ENCODE measurements at regions of chr5 and their contacts with region 1.

Region 1: DNA sequence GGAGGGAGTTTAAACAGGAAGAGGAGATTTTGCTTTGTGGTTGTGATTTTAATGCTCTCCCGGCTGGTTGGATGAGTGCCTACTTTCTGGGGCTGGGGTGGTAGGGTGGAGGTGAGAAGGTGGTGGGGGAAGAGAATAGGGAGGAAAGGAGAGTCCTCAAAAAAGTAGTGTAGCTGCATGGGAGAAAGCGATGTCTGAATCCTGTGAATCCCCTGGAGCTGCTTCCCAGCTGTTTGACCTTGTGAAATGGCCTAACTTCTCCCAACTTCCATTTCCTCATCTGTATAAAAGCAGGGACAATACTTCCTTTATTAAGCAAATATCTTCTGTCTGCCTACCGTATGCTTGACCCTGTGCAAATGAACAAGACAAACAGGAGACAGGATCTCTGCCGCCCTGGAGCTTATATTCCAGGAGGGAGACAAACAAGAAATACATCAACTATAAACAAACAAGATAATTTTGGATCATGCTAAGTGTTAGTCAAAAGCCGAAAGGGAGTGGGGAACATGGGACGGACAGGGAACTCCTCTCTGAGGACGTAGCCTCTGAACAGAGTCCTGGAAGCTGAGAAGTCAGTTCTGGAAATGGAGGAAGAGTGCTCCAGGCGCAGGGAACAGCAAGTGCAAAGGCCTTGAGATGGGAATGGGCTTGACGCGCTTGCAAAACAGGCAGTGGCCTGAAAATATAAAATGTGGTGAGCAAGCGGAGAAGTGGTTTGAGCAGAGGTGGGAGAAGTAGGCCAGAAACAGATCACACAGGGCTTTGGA is 103.5 kb downstream of the SPRY4 start:
- DNase-seq: no peak
- H3K4me3 Mint-ChIP-seq: no peak overlapping the region
- H3K27ac Mint-ChIP-seq: no peak overlapping the region
- H3K4me1 Mint-ChIP-seq: peaks cover 32% of the 10 kb centered on the region
- H3K27me3 Mint-ChIP-seq: peaks cover 2% of the 10 kb centered on the region

Region 2: DNA sequence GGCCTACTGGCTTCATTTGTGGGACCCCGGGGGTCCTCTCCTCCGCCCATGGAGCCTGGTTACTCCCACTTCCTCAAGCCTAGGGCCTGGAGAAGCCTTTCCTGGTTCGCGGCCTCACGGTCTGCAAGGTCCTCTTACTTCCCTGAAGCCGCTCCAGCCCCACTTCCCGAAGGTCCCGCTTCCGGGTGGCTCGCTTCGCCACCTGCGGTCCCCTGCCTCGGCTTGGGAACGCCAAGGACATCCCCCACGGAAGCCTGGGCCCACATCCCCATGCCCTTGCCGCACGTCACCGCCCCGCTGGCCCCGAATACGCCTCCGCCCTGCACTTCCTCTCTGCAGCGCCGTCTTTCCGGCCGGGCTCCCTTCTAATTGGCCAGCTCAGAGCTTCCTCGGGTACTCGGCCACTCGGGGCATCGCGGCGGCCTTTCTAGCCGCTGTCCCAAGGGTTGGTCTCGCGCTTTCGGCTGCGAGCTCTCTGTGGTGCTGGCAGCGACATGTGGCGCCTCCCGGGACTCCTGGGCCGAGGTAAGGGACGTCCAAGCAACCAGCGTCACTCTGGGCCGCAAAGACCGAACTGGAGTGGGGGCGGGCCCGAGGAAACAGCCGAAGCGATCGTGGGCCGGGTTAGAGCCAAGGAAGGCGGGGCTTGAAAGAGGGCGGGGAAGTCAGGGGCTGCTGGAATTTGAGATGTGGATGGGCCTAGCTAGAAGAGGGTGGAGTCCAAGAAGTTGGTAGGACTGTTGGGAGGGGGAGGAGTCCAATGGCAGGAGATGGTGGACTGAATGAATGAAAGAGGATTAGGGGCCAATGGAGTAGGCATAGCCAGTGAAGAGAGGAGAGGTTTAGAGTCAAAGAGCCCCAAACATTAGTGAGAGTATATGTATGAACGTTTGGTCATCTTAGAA is 297.6 kb before region 1 on chr5 and contains the start of gene DELE1:
- CTCF ChIA-PET with region 1: no interaction called
- intact Hi-C with region 1: loop called (anchors 1 kb)
- DNase-seq: peak; percentile 95
- H3K4me3 Mint-ChIP-seq: peak within 1 kb of the TSS; percentile 90
- H3K27ac Mint-ChIP-seq: peak within 1 kb of the TSS; percentile 93
- H3K4me1 Mint-ChIP-seq: peaks cover 18% of the 10 kb centered on the region
- H3K27me3 Mint-ChIP-seq: no peaks in the 10 kb centered on the region
- total RNA-seq, gene DELE1: 48.0 to 50.6 TPM

Region 3: DNA sequence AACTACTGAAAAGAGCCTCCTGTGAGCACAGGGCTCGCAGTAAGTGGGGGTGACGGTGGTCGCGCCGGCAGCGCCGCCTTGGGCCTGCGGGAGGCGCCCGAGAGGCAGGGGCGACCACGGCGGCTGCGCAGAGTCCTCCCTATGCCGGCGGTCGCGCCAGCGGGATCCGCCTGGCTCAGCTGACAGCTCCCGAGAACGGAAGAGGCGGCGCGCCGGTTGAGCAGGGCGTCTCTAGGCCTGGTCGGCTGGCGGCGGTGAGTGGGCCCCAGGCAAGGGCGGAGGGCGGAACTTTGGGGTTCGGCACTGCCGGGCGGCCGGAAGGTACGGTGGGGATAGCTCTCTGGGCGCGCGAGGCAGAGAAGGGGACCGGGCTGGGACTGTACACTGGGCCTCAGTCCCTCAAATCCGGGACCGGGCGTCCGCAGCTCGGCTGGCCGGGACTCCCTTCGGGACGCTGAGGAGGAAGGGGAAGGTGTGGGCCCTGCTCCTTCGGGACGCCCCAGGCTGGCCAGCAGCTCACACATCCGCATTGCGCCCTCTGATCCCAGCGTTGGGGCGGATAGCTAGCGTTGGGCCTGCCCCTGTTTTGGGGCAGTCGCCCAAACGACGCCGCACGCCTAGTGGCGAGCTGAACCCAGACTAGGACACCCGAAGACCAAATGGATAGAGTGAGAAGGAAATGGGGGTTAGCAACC is 252.2 kb before region 1 on chr5 and contains the start of gene RNF14:
- CTCF ChIA-PET with region 1: no interaction called
- intact Hi-C with region 1: loop called (anchors 1 kb)
- DNase-seq: peak; percentile 96
- H3K4me3 Mint-ChIP-seq: peak within 1 kb of the TSS; percentile 93
- H3K27ac Mint-ChIP-seq: peak within 1 kb of the TSS; percentile 91
- H3K4me1 Mint-ChIP-seq: peaks cover 37% of the 10 kb centered on the region
- H3K27me3 Mint-ChIP-seq: no peaks in the 10 kb centered on the region
- total RNA-seq, gene RNF14: 29.8 to 35.6 TPM

Region 4: DNA sequence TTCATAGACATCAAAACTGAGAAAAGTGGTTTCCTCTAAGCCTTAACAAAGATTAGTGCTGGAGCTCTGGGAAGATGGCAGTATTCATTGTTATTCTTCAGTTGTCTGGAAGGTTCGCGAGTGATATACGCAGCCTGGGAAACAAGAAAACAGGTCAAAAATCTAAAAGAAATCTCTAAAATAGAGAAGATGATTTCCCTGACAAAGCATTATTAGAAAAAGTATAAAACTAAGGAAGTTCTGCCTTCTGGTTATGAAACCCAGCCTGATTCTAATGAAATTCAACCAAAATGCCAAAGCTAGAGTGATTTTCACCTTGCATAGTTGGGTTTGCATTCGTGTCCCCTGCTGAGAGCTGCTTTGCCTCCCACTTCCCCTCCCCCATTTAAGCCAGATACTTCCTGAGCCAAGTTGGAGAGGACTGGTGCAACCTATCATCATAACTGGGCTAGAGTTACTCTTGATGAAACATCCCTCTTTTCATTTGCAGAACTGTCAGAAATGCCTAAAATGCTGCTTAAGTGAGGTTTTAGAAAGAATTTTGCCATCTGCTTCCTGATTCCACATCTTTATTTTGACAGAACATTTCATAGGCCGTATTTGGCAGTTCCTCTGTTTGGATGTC is 64.3 kb before region 1 on chr5:
- CTCF ChIA-PET with region 1: no interaction called
- intact Hi-C with region 1: loop called (anchors 5 kb)
- DNase-seq: no peak
- H3K4me3 Mint-ChIP-seq: no peak overlapping the region
- H3K27ac Mint-ChIP-seq: no peak overlapping the region
- H3K4me1 Mint-ChIP-seq: peaks cover 22% of the 10 kb centered on the region
- H3K27me3 Mint-ChIP-seq: no peaks in the 10 kb centered on the region

Region 5: DNA sequence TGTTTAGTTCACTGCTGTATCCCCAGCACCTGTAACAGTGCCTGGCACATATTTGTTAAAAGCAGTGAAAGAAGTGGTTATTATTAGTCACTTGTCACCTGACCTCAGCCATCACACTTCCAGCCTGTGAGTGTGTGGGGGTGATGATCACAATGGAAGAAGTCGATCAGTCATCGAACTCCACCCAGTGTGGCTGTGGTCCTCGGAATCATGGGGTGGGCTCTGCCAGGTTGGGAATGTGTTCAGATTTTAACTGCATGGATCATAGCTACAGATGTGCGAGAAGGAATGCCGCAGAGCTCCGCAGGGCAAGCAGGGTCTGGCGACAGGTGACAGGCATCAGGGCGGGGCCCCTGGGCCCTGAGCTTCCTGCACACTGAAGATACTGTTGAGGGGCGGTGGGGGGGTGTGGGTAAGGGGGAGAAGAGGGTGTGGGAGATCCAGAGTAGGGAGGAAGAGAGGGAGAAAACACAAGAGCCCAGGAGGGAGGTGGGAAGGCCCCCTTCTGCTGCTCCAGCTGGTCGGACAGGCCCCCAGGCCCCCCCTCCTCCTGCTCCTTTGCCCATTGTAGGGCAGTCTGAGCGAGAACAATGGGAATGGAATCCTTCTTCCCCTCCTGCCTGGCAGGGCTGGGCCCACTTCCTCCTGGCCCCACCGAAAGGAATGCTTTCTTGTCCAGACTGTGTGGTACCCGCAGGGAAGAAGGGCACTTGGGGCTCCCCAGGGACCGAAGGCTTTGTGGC is 13.9 kb after region 1 on chr5:
- CTCF ChIA-PET with region 1: interaction called, 3 read pairs
- intact Hi-C with region 1: loop called (anchors 1 kb)
- DNase-seq: peak; percentile 63
- H3K4me3 Mint-ChIP-seq: no peak overlapping the region
- H3K27ac Mint-ChIP-seq: peak overlapping the region; percentile 29
- H3K4me1 Mint-ChIP-seq: peaks cover 13% of the 10 kb centered on the region
- H3K27me3 Mint-ChIP-seq: no peaks in the 10 kb centered on the region

Region 6: GRCh38 chr5:142280066-142280911 is 59.0 kb after region 1 on chr5:
- CTCF ChIA-PET with region 1: no interaction called
- intact Hi-C with region 1: no loop called
- DNase-seq: no peak
- H3K4me3 Mint-ChIP-seq: no peak overlapping the region
- H3K27ac Mint-ChIP-seq: no peak overlapping the region
- H3K4me1 Mint-ChIP-seq: no peaks in the 10 kb centered on the region
- H3K27me3 Mint-ChIP-seq: no peaks in the 10 kb centered on the region

Region 7: GRCh38 chr5:142324871-142325724 is 103.8 kb after region 1 on chr5 and contains the start of gene SPRY4:
- CTCF ChIA-PET with region 1: no interaction called
- intact Hi-C with region 1: loop called (anchors 1 kb)
- DNase-seq: peak; percentile 95
- H3K4me3 Mint-ChIP-seq: peak within 1 kb of the TSS; percentile 85
- H3K27ac Mint-ChIP-seq: peak within 1 kb of the TSS; percentile 18
- H3K4me1 Mint-ChIP-seq: peaks cover 28% of the 10 kb centered on the region
- H3K27me3 Mint-ChIP-seq: peaks cover 55% of the 10 kb centered on the region
- total RNA-seq, gene SPRY4: 0.31 to 0.67 TPM

Region 8: DNA sequence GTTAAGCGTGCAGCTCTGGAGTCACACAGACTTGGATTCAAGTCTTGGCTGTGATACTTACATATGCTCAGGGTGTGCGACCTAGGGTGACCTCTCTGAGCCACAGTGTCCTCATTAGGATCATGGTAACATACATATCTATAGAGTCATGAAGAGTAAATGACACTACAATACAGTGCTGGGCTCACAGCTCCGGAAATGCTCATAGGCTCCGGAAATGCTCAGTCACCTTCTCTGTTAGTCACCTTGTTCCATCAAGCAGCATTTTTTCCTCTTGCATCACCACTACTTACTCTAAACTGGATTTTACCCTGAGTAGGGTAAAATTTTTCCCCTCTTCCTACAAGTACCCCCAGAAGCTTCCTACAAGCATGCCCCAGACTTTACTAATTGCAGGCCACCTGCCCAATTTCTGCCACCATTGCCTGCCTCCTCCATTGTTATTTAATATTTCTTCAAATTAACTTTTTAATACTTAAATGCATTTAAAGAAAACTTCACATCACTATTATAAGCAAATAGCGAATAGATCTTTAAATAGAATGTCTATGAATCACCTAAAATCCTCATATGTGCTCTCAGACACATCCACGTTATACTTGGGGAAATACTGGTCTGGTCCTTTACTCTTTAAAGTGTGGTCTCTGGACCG is 251.2 kb after region 1 on chr5:
- CTCF ChIA-PET with region 1: no interaction called
- intact Hi-C with region 1: loop called (anchors 1 kb)
- DNase-seq: peak; percentile 75
- H3K4me3 Mint-ChIP-seq: no peak overlapping the region
- H3K27ac Mint-ChIP-seq: peak overlapping the region; percentile 69
- H3K4me1 Mint-ChIP-seq: peaks cover 20% of the 10 kb centered on the region
- H3K27me3 Mint-ChIP-seq: no peaks in the 10 kb centered on the region

Region 9: GRCh38 chr5:142600611-142601358 is 379.5 kb after region 1 on chr5:
- CTCF ChIA-PET with region 1: no interaction called
- intact Hi-C with region 1: no loop called
- DNase-seq: no peak
- H3K4me3 Mint-ChIP-seq: no peak overlapping the region
- H3K27ac Mint-ChIP-seq: no peak overlapping the region
- H3K4me1 Mint-ChIP-seq: no peaks in the 10 kb centered on the region
- H3K27me3 Mint-ChIP-seq: peaks cover 8% of the 10 kb centered on the region

Region 10: GRCh38 chr5:142841511-142842265 is 620.4 kb after region 1 on chr5:
- CTCF ChIA-PET with region 1: no interaction called
- intact Hi-C with region 1: no loop called
- DNase-seq: no peak
- H3K4me3 Mint-ChIP-seq: no peak overlapping the region
- H3K27ac Mint-ChIP-seq: no peak overlapping the region
- H3K4me1 Mint-ChIP-seq: peaks cover 25% of the 10 kb centered on the region
- H3K27me3 Mint-ChIP-seq: no peaks in the 10 kb centered on the region